ENCODE measurements at regions of chr4 and their contacts with region 1.

Region 1: GRCh38 chr4:26235500-26235899 is 85.3 kb upstream of the RBPJ start:
- DNase-seq: peak in 1 of 2 experiments; percentile 58
- H3K4me3 ChIP-seq: no peak overlapping the region
- H3K27ac ChIP-seq: peak overlapping the region; percentile 33; the same call in 1 of the 2 replicates
- H3K4me1 ChIP-seq: peaks cover 27% of the 10 kb centered on the region
- H3K27me3 ChIP-seq: no peaks in the 10 kb centered on the region
- CTCF ChIP-seq: no peak

Region 2: GRCh38 chr4:26104056-26104685 is 131.3 kb before region 1 on chr4:
- CTCF ChIA-PET with region 1: no interaction called
- POLR2A ChIA-PET with region 1: no interaction called
- intact Hi-C with region 1: no loop called
- DNase-seq: no peak
- H3K4me3 ChIP-seq: no peak overlapping the region
- H3K27ac ChIP-seq: no peak overlapping the region
- H3K4me1 ChIP-seq: peaks cover 11% of the 10 kb centered on the region
- H3K27me3 ChIP-seq: no peaks in the 10 kb centered on the region
- CTCF ChIP-seq: no peak

Region 3: DNA sequence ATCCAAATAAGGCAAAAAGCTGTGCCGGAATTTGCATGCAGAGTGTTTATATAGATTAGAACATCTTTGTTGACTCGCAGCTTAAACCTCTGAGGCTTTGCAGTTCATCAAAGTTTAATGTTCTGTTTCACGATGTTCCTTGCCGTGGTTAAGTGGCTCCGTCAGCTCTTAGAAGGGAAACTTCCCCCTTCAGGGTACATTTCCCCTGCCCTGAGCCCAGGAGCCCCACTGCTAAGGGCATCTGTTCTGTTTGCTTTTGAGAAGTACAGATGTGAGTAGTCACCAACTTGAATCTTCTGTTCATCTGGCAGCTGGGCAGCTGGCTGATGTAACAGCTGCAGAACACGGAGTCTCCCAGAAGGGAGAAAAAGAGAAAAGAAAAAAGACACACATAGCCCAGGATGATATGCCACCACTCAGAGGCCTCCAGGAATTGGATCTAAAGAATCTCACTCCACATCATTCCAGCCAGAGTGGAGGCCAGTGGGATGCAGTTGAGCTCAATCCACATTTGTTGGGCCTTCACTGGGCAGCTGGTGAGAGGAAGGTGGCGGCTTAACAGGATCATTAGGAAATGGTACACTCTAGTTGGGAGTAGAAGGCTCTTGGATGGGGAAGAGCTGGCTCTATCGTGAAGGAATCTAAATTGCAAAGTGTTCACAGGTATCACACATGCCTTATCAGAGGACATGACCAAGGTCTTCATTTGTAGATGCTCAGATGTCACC is 93.4 kb before region 1 on chr4:
- CTCF ChIA-PET with region 1: no interaction called
- POLR2A ChIA-PET with region 1: no interaction called
- intact Hi-C with region 1: loop called (anchors 5 kb)
- DNase-seq: no peak
- H3K4me3 ChIP-seq: no peak overlapping the region
- H3K27ac ChIP-seq: no peak overlapping the region
- H3K4me1 ChIP-seq: no peaks in the 10 kb centered on the region; the same call in 1 of the 2 replicates
- H3K27me3 ChIP-seq: no peaks in the 10 kb centered on the region
- CTCF ChIP-seq: no peak

Region 4: DNA sequence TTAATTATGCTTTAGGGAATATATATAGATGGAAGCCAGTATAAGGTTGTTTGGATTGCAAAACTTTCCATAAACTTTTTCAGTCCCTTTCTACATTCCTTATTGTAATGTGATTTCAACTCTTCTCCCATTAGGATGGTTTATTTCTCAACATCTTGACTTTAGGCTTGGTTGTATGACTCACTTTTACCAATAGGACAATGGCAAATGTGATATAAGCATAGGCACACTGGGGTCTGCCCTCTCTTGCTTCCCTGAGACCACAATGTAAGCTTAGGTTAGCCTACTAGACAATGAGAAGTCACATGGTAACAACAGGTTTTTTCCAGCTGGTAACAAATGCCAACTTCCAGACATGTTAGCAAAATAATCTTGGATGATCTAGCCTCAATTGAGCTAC is 78.0 kb before region 1 on chr4:
- CTCF ChIA-PET with region 1: no interaction called
- POLR2A ChIA-PET with region 1: no interaction called
- intact Hi-C with region 1: no loop called
- DNase-seq: no peak
- H3K4me3 ChIP-seq: no peak overlapping the region
- H3K27ac ChIP-seq: no peak overlapping the region
- H3K4me1 ChIP-seq: 0 out of 2 replicates have a peak, but pooled peaks cover 3% of the 10 kb centered on the region
- H3K27me3 ChIP-seq: no peaks in the 10 kb centered on the region
- CTCF ChIP-seq: no peak